GM10248 (cell line): ENCODE measurements at regions of chr12 and their contacts with region 1.

Region 1: GRCh38 chr12:53701518-53702260 is 25.6 kb downstream of the CALCOCO1 start:
- DNase-seq: peak; percentile 80
- CTCF ChIP-seq: peak; percentile 99

Region 2: DNA sequence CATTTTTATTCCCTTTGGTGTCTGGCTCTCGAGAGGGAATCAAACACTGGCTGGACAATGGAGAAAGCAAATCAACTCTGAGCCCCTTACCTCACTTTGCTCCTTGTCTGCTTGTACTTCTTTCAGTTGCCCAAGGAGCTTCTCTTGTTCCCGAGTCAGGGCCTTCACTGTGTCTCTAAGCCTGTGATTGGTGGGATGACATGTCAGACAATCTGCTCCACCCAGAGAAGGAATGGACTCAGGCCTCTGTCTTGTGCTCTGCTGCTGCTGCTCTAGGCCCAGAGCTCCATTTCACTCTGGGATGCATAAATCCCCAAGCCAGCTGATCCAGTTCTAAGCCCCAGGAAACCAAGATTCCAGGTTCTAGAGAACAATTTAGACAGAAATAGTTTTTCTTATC is 18.0 kb after region 1 on chr12:
- CTCF ChIA-PET with region 1: interaction called, 11 read pairs
- POLR2A ChIA-PET with region 1: no interaction called
- DNase-seq: no peak
- CTCF ChIP-seq: no peak

Region 3: DNA sequence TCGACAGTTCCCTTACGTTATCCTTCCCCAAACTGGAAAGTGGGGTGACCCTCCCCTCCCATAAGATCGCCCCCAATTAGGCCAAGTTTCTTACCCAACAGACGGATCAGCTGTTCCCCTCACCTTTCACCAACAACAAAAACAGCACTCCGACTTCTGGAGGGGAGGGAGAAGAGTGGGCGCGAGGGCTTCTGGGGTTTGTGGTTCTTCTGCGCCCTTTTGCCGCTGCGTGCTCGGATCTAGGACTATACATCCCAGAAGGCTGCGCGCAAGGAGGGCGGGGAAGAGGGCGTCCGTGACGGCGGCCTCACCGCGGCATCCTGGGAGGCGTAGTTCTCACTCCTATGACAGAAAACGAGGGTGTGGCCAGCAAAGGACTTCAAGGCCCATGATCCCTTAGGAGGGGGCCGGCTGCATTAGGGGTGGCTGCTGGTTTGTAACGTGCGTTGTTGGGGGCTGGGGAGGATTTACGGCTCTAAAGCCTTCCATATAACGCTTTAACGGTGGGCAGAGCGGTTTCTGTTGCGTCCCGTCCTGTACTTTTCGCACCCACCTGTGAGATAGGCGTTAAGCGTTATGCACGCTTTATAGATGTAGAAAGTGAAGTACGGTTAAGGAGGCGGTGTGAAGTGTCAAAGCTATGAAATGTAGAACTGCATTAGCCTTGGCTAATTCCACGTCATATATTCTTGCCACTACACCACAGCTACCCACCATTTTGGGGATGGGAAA is 25.8 kb after region 1 on chr12 and contains the start of gene CALCOCO1:
- CTCF ChIA-PET with region 1: interaction called, 434 read pairs
- POLR2A ChIA-PET with region 1: no interaction called
- DNase-seq: peak; percentile 97
- CTCF ChIP-seq: no peak